Testis (tissue), 5 donors: ENCODE measurements at regions of chr17 and their contacts with region 1.

Region 1: DNA sequence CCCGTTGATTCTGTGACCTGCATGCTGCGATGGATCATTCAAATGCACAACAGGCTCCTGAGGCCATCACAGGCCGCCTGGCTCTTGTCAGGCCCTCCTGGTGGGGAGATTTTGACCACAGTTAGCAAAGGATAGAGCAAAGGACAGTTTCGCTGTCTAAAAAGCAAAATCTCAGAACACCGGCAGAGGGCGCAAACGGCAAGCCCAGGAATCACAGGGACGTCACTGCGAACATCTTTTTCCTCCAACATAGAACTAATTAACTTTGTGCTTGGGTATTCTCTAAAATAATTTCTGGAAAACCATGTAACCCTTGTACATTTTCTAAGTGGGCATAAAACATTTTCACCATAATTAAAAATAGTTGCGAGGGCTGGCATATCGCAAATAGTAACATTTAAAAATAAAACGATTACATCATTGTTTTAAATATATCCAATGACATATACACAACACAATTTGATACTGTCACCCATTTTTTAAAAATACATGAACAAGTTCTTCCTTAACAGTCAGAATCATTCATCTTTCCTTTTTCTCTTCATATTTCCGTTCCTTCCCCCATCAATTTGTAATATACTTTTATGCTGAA is 19.7 kb upstream of the SLC47A1 start:
- DNase-seq: peak; percentile 85
- H3K4me3 ChIP-seq: no peak overlapping the region
- H3K27ac ChIP-seq: no peak overlapping the region
- H3K4me1 ChIP-seq: peaks cover 4% of the 10 kb centered on the region
- H3K27me3 ChIP-seq: no peaks in the 10 kb centered on the region
- CTCF ChIP-seq: peak; percentile 85 to 90 (median 90)
- POLR2A ChIP-seq: no peak

Region 2: GRCh38 chr17:19362277-19363113 is 151.5 kb before region 1 on chr17 and contains the start of gene B9D1:
- intact Hi-C with region 1: no loop called
- DNase-seq: peak; percentile 95
- H3K4me3 ChIP-seq: peak within 1 kb of the TSS; percentile 79
- H3K27ac ChIP-seq: peak within 1 kb of the TSS; percentile 63 to 85
- H3K4me1 ChIP-seq: peaks cover 12% of the 10 kb centered on the region
- H3K27me3 ChIP-seq: no peaks in the 10 kb centered on the region
- CTCF ChIP-seq: peak; percentile 95 to 99 (median 99)
- POLR2A ChIP-seq: no peak
- total RNA-seq, gene B9D1: 42.1 to 59.9 TPM

Region 3: GRCh38 chr17:19648475-19649406 is 134.7 kb after region 1 on chr17 and contains the start of gene ALDH3A2:
- intact Hi-C with region 1: loop called (anchors 10 kb)
- DNase-seq: peak; percentile 99
- H3K4me3 ChIP-seq: peak within 1 kb of the TSS; percentile 63 to 89
- H3K27ac ChIP-seq: peak within 1 kb of the TSS; percentile 97
- H3K4me1 ChIP-seq: peaks cover 36% of the 10 kb centered on the region
- H3K27me3 ChIP-seq: no peaks in the 10 kb centered on the region
- CTCF ChIP-seq: peak in 1 of 3 experiments; percentile 1
- POLR2A ChIP-seq: peak; percentile 42
- total RNA-seq, gene ALDH3A2: 100.0 to 125 TPM

Region 4: DNA sequence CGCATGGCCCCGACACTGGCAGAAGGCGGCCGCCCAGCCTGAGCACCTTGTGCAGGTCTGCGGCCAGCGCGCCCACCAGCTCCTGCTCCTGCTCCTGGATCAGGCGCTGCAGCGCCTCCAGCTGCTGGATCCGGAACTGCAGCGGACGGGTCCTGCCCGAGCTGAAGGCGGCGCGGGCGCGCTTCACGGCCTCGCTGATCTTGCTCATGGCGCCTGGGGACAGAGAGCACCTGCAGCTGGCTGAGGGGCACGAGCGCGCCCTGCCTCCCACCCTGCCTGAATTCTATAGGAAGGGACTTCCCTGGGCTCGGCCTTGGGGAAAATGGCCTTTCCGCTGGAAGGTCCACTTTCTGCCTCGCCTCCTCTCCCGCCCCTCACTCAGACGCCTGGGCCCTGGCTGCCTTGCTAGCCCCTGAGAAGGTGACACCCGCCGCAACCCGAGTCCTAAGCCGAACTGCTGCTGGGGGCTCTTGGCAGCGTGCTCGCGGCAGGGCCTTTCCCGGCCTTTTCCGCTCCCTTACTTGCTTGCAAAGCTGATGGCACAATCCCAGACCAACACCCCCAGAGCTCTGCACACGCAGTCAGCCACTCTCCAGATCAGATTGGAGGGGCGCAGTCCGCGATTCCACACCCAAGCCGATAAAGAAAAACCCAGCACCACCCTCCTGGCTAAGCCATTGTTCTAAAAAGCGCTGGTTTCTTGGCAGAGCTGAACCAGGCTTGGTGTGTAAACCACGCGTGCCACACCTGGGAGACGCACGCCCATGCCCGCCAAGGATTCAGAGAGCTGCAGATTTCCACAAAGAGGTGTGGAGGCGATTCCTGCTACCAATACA is 231.1 kb after region 1 on chr17:
- intact Hi-C with region 1: loop called (anchors 5 kb)
- DNase-seq: peak; percentile 97
- H3K4me3 ChIP-seq: peak overlapping the region; percentile 62 to 73
- H3K27ac ChIP-seq: peak overlapping the region; percentile 69 to 70
- H3K4me1 ChIP-seq: peaks cover 6% of the 10 kb centered on the region
- H3K27me3 ChIP-seq: no peaks in the 10 kb centered on the region
- CTCF ChIP-seq: peak; percentile 84 to 95 (median 94)
- POLR2A ChIP-seq: no peak

Region 5: DNA sequence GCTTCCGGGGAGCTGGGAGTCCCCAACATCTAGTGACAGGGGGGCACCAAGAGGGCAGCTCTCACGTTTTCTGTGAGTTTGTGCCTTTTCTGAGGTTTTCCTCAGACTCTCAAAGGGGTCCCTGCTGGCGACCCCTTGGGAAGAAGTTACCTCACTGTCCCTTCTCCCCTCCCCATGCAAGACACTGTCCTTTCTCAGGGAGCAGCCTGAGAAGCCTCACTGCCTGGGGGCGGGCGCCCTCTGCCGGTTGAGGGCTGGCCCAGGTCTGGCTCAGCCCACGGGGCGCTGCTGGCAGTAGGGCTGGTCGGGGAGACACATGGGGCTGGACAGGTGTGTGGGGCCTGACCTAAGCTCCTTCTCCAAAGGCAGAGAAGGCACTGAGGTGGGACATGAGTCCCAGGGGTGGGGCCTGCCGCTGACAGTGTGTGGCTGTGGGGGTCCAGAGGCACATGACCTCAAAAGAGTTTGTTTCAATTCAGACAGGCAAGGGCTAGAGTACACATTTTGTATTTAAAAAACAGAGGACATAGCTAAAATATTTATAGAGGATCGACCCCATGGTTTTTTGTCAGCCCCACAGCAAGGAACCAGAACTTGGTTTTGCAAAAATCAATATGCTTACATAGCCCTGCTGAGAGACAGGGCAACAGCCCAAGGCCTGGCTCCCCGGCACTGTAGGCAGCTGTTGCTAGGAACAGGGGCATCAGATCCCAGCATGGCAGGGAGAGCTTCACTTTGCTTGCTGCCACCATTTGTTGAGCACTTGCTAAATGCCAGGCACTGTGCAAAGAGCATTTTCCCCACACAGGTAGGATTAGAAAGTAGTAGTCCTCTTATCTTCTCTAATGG is 252.7 kb after region 1 on chr17:
- intact Hi-C with region 1: loop called (anchors 5 kb)
- DNase-seq: peak; percentile 77
- H3K4me3 ChIP-seq: no peak overlapping the region
- H3K27ac ChIP-seq: no peak overlapping the region
- H3K4me1 ChIP-seq: no peaks in the 10 kb centered on the region
- H3K27me3 ChIP-seq: no peaks in the 10 kb centered on the region
- CTCF ChIP-seq: peak; percentile 76 to 90 (median 88)
- POLR2A ChIP-seq: no peak